CD8-positive, alpha-beta T cell (primary cell): ENCODE measurements at regions of chr11 and their contacts with region 1.

Region 1: GRCh38 chr11:119334174-119334930 is at the start of gene RNF26:
- DNase-seq: peak; percentile 88 to 98 (median 93)
- ATAC-seq: peak; percentile 95
- H3K4me3 ChIP-seq: peak within 1 kb of the TSS; percentile 77 to 98
- H3K4me3 Mint-ChIP-seq: peak within 1 kb of the TSS; percentile 98
- H3K27ac ChIP-seq: peak within 1 kb of the TSS; percentile 68 to 86
- H3K27ac Mint-ChIP-seq: peak within 1 kb of the TSS; percentile 97
- H3K4me1 ChIP-seq: peaks cover 13% of the 10 kb centered on the region
- H3K4me1 Mint-ChIP-seq: peaks cover 27% of the 10 kb centered on the region
- H3K27me3 ChIP-seq: peaks cover 10 to 11% of the 10 kb centered on the region in 2 experiments
- H3K27me3 Mint-ChIP-seq: peaks cover 12% of the 10 kb centered on the region
- CTCF ChIP-seq: no peak
- total RNA-seq, gene RNF26: 20.9 TPM

Region 2: DNA sequence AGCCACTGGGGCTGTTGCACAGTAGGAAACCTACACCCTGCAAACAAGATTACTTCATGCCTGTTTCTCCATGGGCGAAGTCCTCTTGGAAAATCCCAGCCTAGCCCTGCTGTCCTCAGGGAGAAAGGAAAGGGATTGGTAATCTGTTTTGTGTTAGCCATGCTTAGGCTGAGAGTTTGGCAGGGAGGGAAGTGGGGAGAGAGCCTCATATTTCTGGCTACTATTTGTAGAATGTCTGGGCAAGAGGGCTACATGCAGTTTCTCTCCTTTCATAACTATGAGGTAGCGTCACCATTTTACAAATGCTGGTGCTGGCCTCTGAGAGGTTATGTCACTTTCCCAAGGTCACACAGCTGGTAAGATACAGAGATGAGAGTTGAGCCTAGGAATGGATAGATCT is 12.9 kb after region 1 on chr11:
- CTCF ChIA-PET with region 1: interaction called, 12 read pairs
- POLR2A ChIA-PET with region 1: no interaction called
- intact Hi-C with region 1: no loop called
- DNase-seq: no peak
- ATAC-seq: no peak
- H3K4me3 ChIP-seq: no peak overlapping the region
- H3K4me3 Mint-ChIP-seq: no peak overlapping the region
- H3K27ac ChIP-seq: no peak overlapping the region
- H3K27ac Mint-ChIP-seq: no peak overlapping the region
- H3K4me1 ChIP-seq: no peaks in the 10 kb centered on the region
- H3K4me1 Mint-ChIP-seq: peaks cover 3% of the 10 kb centered on the region
- H3K27me3 ChIP-seq: peaks cover under 1 to 4% of the 10 kb centered on the region in 2 experiments
- H3K27me3 Mint-ChIP-seq: peaks cover 36% of the 10 kb centered on the region
- CTCF ChIP-seq: no peak

Region 3: DNA sequence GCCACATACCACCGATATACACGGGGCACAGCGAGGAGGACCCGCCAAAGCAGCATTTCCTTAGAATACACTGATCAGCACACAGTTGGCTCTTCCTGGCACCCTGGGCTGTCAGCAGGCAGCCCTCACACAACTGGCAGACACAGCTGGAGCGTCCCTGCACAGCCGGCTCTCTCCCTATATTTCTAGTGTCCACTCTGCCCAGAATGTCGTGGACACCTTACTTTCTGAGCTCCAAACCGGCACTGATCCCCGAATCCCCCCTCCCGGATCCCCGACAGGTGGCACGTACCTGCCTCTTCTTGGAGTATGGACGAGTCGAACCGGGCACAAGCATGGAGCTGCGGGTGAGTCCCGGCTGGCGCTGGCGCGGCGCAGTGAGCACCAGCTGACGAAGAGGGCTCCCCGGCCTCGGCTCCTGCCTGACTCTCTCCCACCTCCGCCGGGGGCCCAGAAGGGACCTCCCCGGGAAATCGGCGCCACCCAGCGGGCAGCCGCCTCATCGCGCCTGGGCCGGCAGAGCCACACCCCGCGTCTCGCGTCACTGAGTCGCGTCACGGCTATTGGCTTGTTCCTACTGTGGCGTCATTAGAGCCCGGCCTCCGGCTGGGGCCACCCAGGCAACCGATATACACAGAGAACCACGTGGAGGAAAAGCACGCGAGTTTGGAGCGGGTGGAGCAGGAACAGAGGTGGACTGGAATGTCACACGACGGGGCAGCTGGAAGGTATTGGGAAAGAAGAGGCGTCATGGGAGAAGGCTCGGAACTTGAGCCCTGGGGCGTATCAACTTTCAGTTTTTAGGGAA is 47.0 kb after region 1 on chr11 and contains the start of gene USP2:
- CTCF ChIA-PET with region 1: interaction called, 5 read pairs
- POLR2A ChIA-PET with region 1: no interaction called
- intact Hi-C with region 1: loop called (anchors 1 kb)
- DNase-seq: peak; percentile 94 to 98 (median 97)
- ATAC-seq: peak; percentile 98
- H3K4me3 ChIP-seq: peak within 1 kb of the TSS; percentile 74 to 80
- H3K4me3 Mint-ChIP-seq: no peak within 1 kb of the TSS
- H3K27ac ChIP-seq: peak within 1 kb of the TSS; percentile 57 to 73
- H3K27ac Mint-ChIP-seq: peak within 1 kb of the TSS; percentile 21
- H3K4me1 ChIP-seq: peaks cover 16% of the 10 kb centered on the region
- H3K4me1 Mint-ChIP-seq: peaks cover 7% of the 10 kb centered on the region
- H3K27me3 ChIP-seq: peaks cover 0 to 14% of the 10 kb centered on the region in 2 experiments
- H3K27me3 Mint-ChIP-seq: no peaks in the 10 kb centered on the region
- CTCF ChIP-seq: peak; percentile 92
- total RNA-seq, gene USP2: 3.4 to 5.9 TPM